ENCODE measurements at regions of chr11 and their contacts with region 1.

Region 1: DNA sequence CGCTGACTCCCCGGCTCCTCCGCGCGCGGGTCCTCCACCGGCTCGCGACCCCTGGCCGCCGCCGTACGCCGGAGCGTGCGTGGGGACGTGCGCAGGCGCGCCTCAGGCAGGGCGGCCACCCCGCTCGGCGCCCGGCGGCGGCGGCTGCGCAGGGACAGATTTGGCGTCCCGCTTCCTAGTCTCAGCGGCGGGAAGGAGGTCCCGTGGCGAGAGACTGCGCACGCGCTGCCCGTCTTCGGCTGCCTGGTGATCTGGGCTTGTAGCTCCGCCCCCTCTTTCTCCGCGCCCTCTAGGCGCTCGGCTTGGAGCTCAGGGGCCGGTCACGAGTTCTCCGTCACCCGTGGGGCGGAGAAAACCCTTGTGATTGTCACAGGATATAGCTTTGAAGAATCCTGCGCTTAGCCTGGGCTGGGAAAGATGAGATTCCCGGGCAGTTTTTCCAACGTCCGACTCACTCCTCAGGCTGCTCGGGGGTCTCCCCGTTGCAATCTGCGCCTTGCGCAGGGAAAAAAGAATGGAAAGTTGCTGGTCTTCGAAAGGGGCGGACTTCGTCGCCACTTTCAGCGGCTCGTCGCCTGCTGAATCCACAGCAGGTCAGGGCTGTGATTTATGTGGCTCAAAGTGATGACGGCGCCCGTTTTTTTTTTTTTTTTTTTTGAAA is at the start of gene PATL1:
- DNase-seq: peak; percentile 95 to 99
- H3K4me3 ChIP-seq: peak within 1 kb of the TSS; percentile 81
- H3K27ac ChIP-seq: peak within 1 kb of the TSS; percentile 88
- H3K4me1 ChIP-seq: peaks cover 25% of the 10 kb centered on the region
- H3K27me3 ChIP-seq: no peaks in the 10 kb centered on the region
- CTCF ChIP-seq: no peak
- total RNA-seq, gene PATL1: 33.5 and 55.0 TPM in 2 replicates

Region 2: GRCh38 chr11:59542142-59542810 is 126.8 kb before region 1 on chr11:
- CTCF ChIA-PET with region 1: interaction called, 4 read pairs
- POLR2A ChIA-PET with region 1: no interaction called
- intact Hi-C with region 1: loop called (anchors 1 kb)
- DNase-seq: no peak
- H3K4me3 ChIP-seq: no peak overlapping the region
- H3K27ac ChIP-seq: no peak overlapping the region
- H3K4me1 ChIP-seq: 0 out of 2 replicates have a peak, but pooled peaks cover 13% of the 10 kb centered on the region
- H3K27me3 ChIP-seq: no peaks in the 10 kb centered on the region
- CTCF ChIP-seq: no peak

Region 3: DNA sequence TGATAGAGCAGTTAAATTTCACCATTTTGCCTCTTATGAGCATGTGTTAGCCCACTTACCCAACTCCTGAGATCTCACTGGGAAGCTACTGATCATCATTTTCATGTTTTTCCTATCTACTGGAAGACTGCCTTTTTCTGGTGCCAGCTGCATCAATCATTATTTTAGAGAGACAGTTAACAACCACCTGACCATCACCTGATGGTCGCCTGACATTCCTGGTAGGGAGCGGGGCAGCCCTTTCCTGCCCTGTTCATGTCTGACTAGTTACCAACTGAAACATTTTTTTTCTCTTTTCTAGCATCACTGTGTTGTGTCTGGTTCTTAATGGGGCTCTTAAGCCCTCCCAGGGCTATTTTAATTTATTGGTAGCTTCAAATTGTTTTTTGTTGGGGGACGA is 19.9 kb after region 1 on chr11:
- CTCF ChIA-PET with region 1: interaction called, 5 read pairs
- POLR2A ChIA-PET with region 1: interaction called, 15 read pairs
- intact Hi-C with region 1: no loop called
- DNase-seq: peak in 1 of 2 experiments; percentile 8
- H3K4me3 ChIP-seq: no peak overlapping the region
- H3K27ac ChIP-seq: no peak overlapping the region
- H3K4me1 ChIP-seq: peaks cover 8% of the 10 kb centered on the region
- H3K27me3 ChIP-seq: no peaks in the 10 kb centered on the region
- CTCF ChIP-seq: no peak

Region 4: DNA sequence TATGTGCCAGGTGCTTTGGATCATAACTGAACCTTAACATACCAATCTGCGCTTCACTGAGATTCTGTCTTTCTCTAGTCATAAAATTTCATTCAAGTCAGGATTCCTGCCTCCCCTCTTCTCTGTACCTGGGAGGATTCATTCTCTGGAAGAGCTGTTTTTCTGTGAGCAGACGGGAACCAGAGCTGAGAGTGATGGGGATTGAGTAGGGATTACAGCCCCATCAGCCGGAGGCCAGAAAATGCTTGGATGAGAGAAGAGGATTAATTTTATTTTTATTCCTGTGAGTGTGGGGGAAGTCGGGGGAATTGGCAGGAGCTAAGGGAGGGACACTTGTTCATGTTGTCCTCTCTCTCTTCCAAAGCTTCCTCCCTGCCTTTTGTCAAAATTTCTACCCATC is 90.8 kb after region 1 on chr11:
- CTCF ChIA-PET with region 1: interaction called, 12 read pairs
- POLR2A ChIA-PET with region 1: interaction called, 29 read pairs
- intact Hi-C with region 1: loop called (anchors 1 kb)
- DNase-seq: no peak
- H3K4me3 ChIP-seq: no peak overlapping the region
- H3K27ac ChIP-seq: no peak overlapping the region
- H3K4me1 ChIP-seq: peaks cover 19% of the 10 kb centered on the region
- H3K27me3 ChIP-seq: no peaks in the 10 kb centered on the region
- CTCF ChIP-seq: no peak

Region 5: DNA sequence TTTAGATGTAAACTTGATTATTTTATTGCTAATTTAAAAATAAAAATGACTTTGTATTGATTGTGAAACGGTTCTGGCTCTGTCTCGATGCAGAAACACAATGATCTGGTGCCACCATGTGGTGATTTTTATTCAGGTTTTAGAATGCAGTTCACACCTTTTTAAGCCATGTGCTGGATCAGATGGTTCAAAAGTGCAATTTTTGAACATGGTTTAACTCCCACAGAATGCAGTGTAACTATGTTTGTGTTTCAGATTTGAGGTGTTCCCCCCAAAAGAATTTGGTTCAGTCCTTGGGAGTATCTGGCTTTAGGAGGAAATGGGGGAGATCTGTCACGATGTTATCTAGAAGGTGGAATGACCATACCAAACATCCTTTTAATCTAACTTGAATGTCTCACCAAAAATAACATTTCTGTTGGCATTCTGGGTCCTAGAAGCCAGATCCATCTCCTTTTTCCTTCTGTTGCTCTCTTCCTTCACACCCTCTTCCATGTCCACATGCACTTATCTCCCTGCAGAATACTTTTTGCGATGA is 133.6 kb after region 1 on chr11:
- CTCF ChIA-PET with region 1: interaction called, 4 read pairs
- POLR2A ChIA-PET with region 1: interaction called, 20 read pairs
- intact Hi-C with region 1: loop called (anchors 2 kb)
- DNase-seq: peak; percentile 39 to 48
- H3K4me3 ChIP-seq: no peak overlapping the region
- H3K27ac ChIP-seq: no peak overlapping the region
- H3K4me1 ChIP-seq: peaks cover 25% of the 10 kb centered on the region
- H3K27me3 ChIP-seq: no peaks in the 10 kb centered on the region
- CTCF ChIP-seq: peak; percentile 91

Region 6: GRCh38 chr11:61056571-61056970 is 1387.5 kb after region 1 on chr11:
- CTCF ChIA-PET with region 1: no interaction called
- POLR2A ChIA-PET with region 1: no interaction called
- intact Hi-C with region 1: no loop called
- DNase-seq: peak in 1 of 2 experiments; percentile 45
- H3K4me3 ChIP-seq: no peak overlapping the region
- H3K27ac ChIP-seq: no peak overlapping the region
- H3K4me1 ChIP-seq: peaks cover 16% of the 10 kb centered on the region
- H3K27me3 ChIP-seq: no peaks in the 10 kb centered on the region
- CTCF ChIP-seq: no peak